Calu3 (cell line): ENCODE measurements at regions of chr11 and their contacts with region 1.

Region 1: DNA sequence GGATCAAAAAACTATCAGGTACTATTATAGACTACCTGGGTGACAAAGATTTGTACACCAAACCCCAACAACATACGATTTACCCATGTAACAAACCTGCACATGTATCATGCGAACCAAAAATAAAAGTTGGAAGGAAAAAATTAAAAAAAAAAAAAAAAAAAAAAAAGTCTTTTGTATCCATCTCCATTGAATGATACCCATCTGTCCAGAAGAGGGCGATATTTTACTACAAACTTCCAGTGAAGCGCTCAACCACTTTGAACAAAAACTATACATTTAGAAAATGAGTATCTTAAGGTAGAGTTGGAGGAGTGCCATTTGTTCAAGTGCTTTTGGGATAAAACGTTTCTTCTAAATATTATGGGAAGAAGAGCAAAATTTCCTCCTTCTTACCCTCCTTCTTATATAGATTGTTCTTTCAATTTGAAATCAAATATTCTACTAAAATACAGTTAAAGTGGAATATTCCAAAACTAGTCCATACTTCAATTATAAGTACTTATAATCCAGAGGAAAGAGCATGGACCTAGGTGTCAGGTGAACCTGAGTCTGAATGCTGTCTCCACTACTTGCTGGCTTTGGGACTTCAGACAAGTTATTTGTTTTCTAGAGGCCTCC is 23.3 kb downstream of the ARL14EP start:
- DNase-seq: peak; percentile 10
- H3K4me3 Mint-ChIP-seq: no peak overlapping the region
- H3K27ac Mint-ChIP-seq: no peak overlapping the region
- H3K4me1 Mint-ChIP-seq: no peaks in the 10 kb centered on the region
- H3K27me3 Mint-ChIP-seq: peaks cover 14% of the 10 kb centered on the region
- CTCF ChIP-seq: peak; percentile 18

Region 2: DNA sequence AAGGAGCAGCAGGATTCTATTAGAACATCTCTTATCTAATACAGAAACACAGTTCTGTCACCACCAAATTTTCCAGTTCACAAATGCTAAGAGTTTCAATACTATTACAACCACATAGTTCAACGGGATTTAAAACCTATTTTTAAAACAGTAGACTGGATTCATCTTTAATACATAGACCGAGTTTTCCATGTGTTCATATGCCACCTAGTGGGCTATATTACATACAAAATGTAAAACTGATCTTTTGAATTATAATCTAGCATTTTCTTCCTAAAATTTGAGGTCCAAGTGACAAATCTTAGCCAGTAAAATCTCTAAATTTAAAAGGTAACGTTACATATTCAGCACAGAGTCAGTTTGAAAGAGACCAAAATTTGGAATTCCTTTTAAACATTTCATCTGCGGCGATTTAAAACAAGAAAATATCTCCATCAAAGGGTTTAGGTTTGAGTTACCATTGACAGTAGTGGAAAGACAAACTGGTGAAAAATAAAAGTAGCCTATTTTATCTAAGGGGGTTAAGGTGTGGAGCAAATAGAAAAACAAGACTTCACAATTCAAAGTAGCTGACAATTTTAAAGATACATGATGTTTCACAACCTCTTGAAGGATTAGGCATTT is 509.3 kb after region 1 on chr11:
- CTCF ChIA-PET with region 1: no interaction called
- intact Hi-C with region 1: loop called (anchors 1 kb)
- DNase-seq: no peak
- H3K4me3 Mint-ChIP-seq: no peak overlapping the region
- H3K27ac Mint-ChIP-seq: no peak overlapping the region
- H3K4me1 Mint-ChIP-seq: no peaks in the 10 kb centered on the region
- H3K27me3 Mint-ChIP-seq: peaks cover 16% of the 10 kb centered on the region
- CTCF ChIP-seq: no peak

Region 3: DNA sequence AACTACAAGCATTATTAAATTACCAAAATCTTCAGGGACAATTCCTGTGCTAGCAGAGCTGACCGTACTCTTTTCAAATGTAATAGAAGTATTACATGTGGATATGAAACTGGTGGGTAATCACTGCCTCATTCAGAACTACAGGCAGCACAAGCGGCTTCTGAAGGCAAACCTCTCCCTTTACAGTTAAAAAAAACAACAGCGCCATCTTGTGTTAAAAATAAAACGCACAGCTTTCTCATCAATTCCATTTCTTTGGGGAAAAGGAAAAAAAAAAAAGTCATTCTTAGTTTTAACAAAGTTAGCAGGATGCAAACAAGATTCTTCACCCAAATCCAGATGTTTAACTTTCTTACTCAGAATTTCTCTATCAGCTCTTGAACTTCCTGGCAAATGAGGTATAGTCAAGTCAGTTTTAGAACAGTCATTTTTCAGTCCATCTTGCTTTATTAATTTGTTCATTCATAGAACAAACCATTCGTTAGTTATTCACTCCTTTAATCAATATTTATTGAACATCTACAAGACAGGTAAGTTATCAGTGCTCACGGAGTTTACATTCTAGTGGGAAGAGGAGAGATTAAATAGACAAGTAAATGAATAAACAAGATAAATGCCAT is 571.8 kb after region 1 on chr11:
- CTCF ChIA-PET with region 1: no interaction called
- intact Hi-C with region 1: loop called (anchors 2 kb)
- DNase-seq: peak; percentile 24
- H3K4me3 Mint-ChIP-seq: no peak overlapping the region
- H3K27ac Mint-ChIP-seq: no peak overlapping the region
- H3K4me1 Mint-ChIP-seq: no peaks in the 10 kb centered on the region
- H3K27me3 Mint-ChIP-seq: peaks cover 36% of the 10 kb centered on the region
- CTCF ChIP-seq: peak; percentile 68